ENCODE measurements at regions of chr2 and their contacts with region 1.

Region 1: GRCh38 chr2:202634556-202635427 is at the start of gene FAM117B:
- DNase-seq: peak; percentile 99
- H3K4me3 Mint-ChIP-seq: peak within 1 kb of the TSS; percentile 95
- H3K27ac Mint-ChIP-seq: peak within 1 kb of the TSS; percentile 94
- H3K4me1 Mint-ChIP-seq: peaks cover 43% of the 10 kb centered on the region
- H3K27me3 Mint-ChIP-seq: no peaks in the 10 kb centered on the region
- total RNA-seq, gene FAM117B: 5.8 to 5.9 TPM

Region 2: GRCh38 chr2:202588647-202589581 is 45.9 kb before region 1 on chr2:
- CTCF ChIA-PET with region 1: interaction called, 17 read pairs
- POLR2A ChIA-PET with region 1: interaction called, 5 read pairs
- intact Hi-C with region 1: loop called (anchors 1 kb)
- DNase-seq: peak; percentile 77
- H3K4me3 Mint-ChIP-seq: no peak overlapping the region
- H3K27ac Mint-ChIP-seq: no peak overlapping the region
- H3K4me1 Mint-ChIP-seq: peaks cover 7% of the 10 kb centered on the region
- H3K27me3 Mint-ChIP-seq: peaks cover 2% of the 10 kb centered on the region

Region 3: GRCh38 chr2:202703091-202703490 is 68.3 kb after region 1 on chr2:
- CTCF ChIA-PET with region 1: interaction called, 4 read pairs
- POLR2A ChIA-PET with region 1: interaction called, 10 read pairs
- intact Hi-C with region 1: loop called (anchors 1 kb)
- DNase-seq: no peak
- H3K4me3 Mint-ChIP-seq: no peak overlapping the region
- H3K27ac Mint-ChIP-seq: peak overlapping the region; percentile 0
- H3K4me1 Mint-ChIP-seq: peaks cover 60% of the 10 kb centered on the region
- H3K27me3 Mint-ChIP-seq: no peaks in the 10 kb centered on the region

Region 4: GRCh38 chr2:202911512-202912341 is 276.9 kb after region 1 on chr2 and contains the starts of genes CARF and WDR12:
- CTCF ChIA-PET with region 1: no interaction called
- POLR2A ChIA-PET with region 1: no interaction called
- intact Hi-C with region 1: loop called (anchors 1 kb)
- DNase-seq: peak; percentile 94
- H3K4me3 Mint-ChIP-seq: peak within 1 kb of the TSS; percentile 98
- H3K27ac Mint-ChIP-seq: peak within 1 kb of the TSS; percentile 93
- H3K4me1 Mint-ChIP-seq: peaks cover 32% of the 10 kb centered on the region
- H3K27me3 Mint-ChIP-seq: no peaks in the 10 kb centered on the region
- total RNA-seq, gene CARF: 5.2 to 6.6 TPM
- total RNA-seq, gene WDR12: 86.1 to 97.8 TPM

Region 5: DNA sequence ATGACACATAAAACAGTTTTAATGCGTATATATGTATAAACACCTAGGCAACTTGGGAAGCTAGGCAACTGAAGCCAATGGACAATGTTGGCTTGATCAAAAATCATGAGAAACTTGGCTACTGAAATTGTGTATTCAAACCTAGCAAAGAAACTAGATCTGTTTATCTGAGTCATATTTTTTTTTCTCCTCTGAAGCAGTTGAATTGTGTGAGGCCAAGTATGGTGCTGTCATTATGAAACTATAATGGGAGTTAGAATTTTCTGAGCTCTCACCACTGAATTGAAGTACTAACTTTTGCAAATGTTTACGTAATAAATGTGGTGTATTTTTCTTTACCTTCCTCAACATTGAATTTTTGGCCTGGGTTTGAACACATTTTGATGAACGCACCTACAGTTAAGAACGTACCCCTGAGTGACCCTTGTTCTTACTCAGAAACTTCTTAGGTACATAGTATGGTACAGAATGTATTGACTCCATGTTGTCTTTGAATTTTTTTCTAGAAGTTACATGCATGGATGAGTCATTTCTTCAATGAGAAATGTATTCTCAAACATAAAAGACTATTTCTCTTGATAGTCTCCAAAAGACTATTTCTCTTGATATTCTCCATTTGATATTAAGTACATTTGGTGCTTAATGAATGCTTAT is 1095.4 kb after region 1 on chr2:
- CTCF ChIA-PET with region 1: no interaction called
- POLR2A ChIA-PET with region 1: no interaction called
- intact Hi-C with region 1: loop called (anchors 10 kb)
- DNase-seq: no peak
- H3K4me3 Mint-ChIP-seq: peak overlapping the region; percentile 47
- H3K27ac Mint-ChIP-seq: peak overlapping the region; percentile 99
- H3K4me1 Mint-ChIP-seq: peaks cover 93% of the 10 kb centered on the region
- H3K27me3 Mint-ChIP-seq: no peaks in the 10 kb centered on the region